ENCODE measurements at regions of chr20 and their contacts with region 1.

Region 1: GRCh38 chr20:37342231-37343177 is 3.4 kb upstream of the SRC start:
- DNase-seq: peak; percentile 68

Region 2: DNA sequence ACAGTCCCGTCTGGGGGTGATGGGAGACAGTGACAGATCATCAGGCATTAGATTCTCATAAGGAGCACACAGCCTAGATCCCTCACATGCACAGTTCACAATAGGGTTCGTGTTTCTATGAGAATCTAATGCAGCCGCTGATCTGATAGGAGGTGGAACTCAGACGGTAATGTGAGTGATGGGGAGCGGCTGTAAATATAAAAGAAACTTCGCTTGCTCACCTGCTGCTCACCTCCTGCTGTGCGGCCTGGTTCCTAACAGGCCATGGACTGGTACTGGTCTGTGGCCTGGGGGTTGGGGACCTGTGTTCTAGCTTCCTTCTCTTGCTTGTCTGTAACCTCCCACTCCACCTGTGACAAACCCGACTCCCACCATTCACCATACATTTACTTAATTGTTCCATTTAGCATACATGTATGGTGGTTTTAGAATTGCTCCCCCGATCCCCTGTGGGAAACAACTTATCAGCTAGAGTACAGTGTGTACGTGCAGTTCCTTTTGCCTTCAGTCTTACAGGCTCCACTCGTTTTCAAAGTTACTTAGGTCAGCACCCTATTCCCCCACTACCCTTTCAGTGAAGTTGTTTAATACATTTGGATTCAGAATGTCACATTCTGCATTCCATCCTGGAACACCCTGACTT is 49.1 kb before region 1 on chr20:
- intact Hi-C with region 1: loop called in 1 of 2 experiments (anchors 1 kb)
- DNase-seq: no peak

Region 3: GRCh38 chr20:37378785-37379598 is 36.5 kb after region 1 on chr20:
- intact Hi-C with region 1: loop called in 1 of 2 experiments (anchors 5 kb)
- DNase-seq: peak; percentile 82

Measured in posterior vena cava (tissue), 2 donors.